Activated B cell treated with CpG ODN at 0.5 μM for 24 hours (primary cell): ENCODE measurements at regions of chr12 and their contacts with region 1.

Region 1: DNA sequence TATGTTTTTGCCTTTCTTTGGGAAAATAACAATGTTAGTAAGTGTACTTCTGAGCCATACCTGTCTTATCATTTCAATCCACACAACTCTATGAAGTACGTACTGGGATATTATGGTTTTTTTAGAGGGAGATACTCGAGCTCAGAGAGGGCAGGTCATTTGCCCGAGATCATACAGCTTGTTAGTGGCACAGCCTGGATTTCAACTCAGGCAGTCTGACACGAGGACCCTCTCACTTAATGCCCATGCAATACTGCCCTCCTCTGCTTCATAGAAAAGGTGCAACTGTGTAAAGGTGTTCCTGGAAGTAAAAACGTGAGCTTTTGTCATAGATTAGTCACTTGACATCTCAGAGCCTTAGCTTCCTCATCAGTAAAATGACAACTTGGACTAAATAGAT is 128.0 kb downstream of the NDUFA12 start:
- DNase-seq: no peak
- ATAC-seq: peak; percentile 74
- H3K4me3 Mint-ChIP-seq: peak overlapping the region; percentile 74
- H3K27ac Mint-ChIP-seq: peak overlapping the region; percentile 46
- H3K4me1 Mint-ChIP-seq: peaks cover 38% of the 10 kb centered on the region
- H3K27me3 Mint-ChIP-seq: peaks cover 37% of the 10 kb centered on the region
- CTCF ChIP-seq: no peak

Region 2: GRCh38 chr12:94149119-94149780 is 726.3 kb before region 1 on chr12:
- CTCF ChIA-PET with region 1: interaction called, 3 read pairs
- POLR2A ChIA-PET with region 1: no interaction called
- intact Hi-C with region 1: loop called (anchors 2 kb)
- DNase-seq: peak; percentile 71
- ATAC-seq: peak; percentile 29
- H3K4me3 Mint-ChIP-seq: peak overlapping the region; percentile 96
- H3K27ac Mint-ChIP-seq: peak overlapping the region; percentile 70
- H3K4me1 Mint-ChIP-seq: peaks cover 58% of the 10 kb centered on the region
- H3K27me3 Mint-ChIP-seq: no peaks in the 10 kb centered on the region
- CTCF ChIP-seq: no peak

Region 3: GRCh38 chr12:94401326-94401725 is 474.2 kb before region 1 on chr12:
- CTCF ChIA-PET with region 1: no interaction called
- POLR2A ChIA-PET with region 1: no interaction called
- intact Hi-C with region 1: no loop called
- DNase-seq: no peak
- ATAC-seq: no peak
- H3K4me3 Mint-ChIP-seq: no peak overlapping the region
- H3K27ac Mint-ChIP-seq: no peak overlapping the region
- H3K4me1 Mint-ChIP-seq: peaks cover 17% of the 10 kb centered on the region
- H3K27me3 Mint-ChIP-seq: no peaks in the 10 kb centered on the region
- CTCF ChIP-seq: no peak

Region 4: DNA sequence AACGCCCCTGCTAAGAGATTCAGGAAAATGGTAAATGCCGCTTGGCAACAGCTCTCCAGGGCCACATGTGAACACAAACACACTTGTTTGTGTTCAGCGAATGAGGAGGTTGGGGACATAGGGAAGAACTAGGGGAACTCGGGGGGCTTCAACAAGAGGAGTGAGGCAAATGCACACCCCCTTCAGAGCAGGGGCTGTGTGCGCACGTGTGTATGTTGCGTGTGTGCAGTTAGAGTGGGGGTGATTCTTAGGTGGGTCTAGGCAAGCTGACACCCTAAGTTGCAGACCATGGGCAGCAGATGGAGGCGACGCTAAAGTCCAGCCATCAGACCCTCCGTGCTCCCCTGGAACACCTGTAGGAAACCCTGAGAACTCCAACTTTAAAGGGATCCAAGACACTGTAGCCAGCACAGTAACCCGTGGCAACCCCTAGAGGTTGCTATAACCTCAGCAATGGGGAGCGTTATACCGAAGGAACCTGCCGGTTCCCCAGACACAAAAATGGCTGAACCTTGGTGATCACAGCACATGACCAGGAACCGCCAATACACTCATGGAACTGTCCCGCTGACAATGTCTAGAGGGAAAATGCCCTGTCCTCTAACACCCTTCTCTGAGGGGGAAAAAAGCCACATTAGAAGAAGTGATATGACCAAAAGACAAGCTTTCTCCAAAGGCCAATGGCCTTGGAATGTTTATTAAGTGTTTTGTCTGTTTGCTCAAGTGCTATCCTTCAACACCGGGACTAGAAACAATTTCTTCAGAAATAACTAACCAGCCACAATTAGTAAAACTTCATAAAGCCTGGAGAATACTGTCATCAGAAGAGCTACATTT is 329.4 kb before region 1 on chr12:
- CTCF ChIA-PET with region 1: interaction called, 4 read pairs
- POLR2A ChIA-PET with region 1: no interaction called
- intact Hi-C with region 1: loop called (anchors 1 kb)
- DNase-seq: no peak
- ATAC-seq: peak; percentile 76
- H3K4me3 Mint-ChIP-seq: no peak overlapping the region
- H3K27ac Mint-ChIP-seq: no peak overlapping the region
- H3K4me1 Mint-ChIP-seq: no peaks in the 10 kb centered on the region
- H3K27me3 Mint-ChIP-seq: no peaks in the 10 kb centered on the region
- CTCF ChIP-seq: no peak

Region 5: GRCh38 chr12:94676031-94676641 is 199.4 kb before region 1 on chr12:
- CTCF ChIA-PET with region 1: interaction called, 6 read pairs
- POLR2A ChIA-PET with region 1: interaction called, 13 read pairs
- intact Hi-C with region 1: no loop called
- DNase-seq: no peak
- ATAC-seq: peak; percentile 96
- H3K4me3 Mint-ChIP-seq: peak overlapping the region; percentile 60
- H3K27ac Mint-ChIP-seq: peak overlapping the region; percentile 81
- H3K4me1 Mint-ChIP-seq: peaks cover 39% of the 10 kb centered on the region
- H3K27me3 Mint-ChIP-seq: no peaks in the 10 kb centered on the region
- CTCF ChIP-seq: no peak

Region 6: DNA sequence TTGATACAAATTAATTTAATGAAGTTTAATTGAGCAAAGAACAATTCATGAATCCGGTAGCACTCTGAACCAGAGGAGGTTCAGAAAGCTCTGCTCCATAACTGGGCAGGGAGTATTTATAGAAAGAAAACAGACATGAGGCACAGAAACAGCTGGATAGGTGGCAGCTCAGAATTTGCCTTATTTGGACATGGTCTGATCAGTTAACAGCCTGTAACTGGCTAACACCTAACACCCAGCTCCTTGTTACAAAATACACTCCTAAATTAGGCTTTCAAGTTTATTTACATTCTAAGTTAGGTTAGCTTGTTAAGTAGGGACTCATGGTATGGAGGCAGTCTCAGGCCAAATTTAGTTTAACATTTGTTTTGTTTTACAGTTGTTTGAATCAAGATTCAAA is 157.4 kb before region 1 on chr12:
- CTCF ChIA-PET with region 1: interaction called, 17 read pairs
- POLR2A ChIA-PET with region 1: interaction called, 5 read pairs
- intact Hi-C with region 1: no loop called
- DNase-seq: no peak
- ATAC-seq: no peak
- H3K4me3 Mint-ChIP-seq: no peak overlapping the region
- H3K27ac Mint-ChIP-seq: no peak overlapping the region
- H3K4me1 Mint-ChIP-seq: peaks cover 39% of the 10 kb centered on the region
- H3K27me3 Mint-ChIP-seq: no peaks in the 10 kb centered on the region
- CTCF ChIP-seq: no peak

Region 7: GRCh38 chr12:94769047-94769420 is 106.5 kb before region 1 on chr12:
- CTCF ChIA-PET with region 1: interaction called, 31 read pairs
- POLR2A ChIA-PET with region 1: interaction called, 26 read pairs
- intact Hi-C with region 1: loop called (anchors 1 kb)
- DNase-seq: peak; percentile 26
- ATAC-seq: peak; percentile 86
- H3K4me3 Mint-ChIP-seq: peak overlapping the region; percentile 86
- H3K27ac Mint-ChIP-seq: peak overlapping the region; percentile 98
- H3K4me1 Mint-ChIP-seq: peaks cover 68% of the 10 kb centered on the region
- H3K27me3 Mint-ChIP-seq: no peaks in the 10 kb centered on the region
- CTCF ChIP-seq: no peak

Region 8: DNA sequence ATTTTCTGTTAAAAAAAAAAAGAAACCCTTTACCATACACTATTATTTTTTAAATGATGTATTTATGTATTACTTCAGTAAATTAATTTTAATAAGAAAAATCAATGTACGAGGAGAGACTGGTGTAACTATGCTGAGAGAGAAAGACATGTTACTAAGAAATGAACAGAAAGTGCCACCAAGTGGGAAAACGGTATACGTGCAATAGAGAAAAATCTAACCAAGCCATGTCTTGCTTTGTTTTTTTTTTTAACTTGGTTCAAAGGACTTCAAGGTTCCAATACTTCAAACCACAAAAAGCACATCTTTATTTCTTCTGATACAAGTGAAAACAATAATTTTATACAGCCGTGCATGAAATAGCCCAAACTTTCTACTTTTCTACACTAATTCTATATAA is 105.1 kb after region 1 on chr12:
- CTCF ChIA-PET with region 1: interaction called, 3 read pairs
- POLR2A ChIA-PET with region 1: no interaction called
- intact Hi-C with region 1: loop called (anchors 5 kb)
- DNase-seq: no peak
- ATAC-seq: no peak
- H3K4me3 Mint-ChIP-seq: no peak overlapping the region
- H3K27ac Mint-ChIP-seq: no peak overlapping the region
- H3K4me1 Mint-ChIP-seq: peaks cover 5% of the 10 kb centered on the region
- H3K27me3 Mint-ChIP-seq: no peaks in the 10 kb centered on the region
- CTCF ChIP-seq: no peak

Region 9: DNA sequence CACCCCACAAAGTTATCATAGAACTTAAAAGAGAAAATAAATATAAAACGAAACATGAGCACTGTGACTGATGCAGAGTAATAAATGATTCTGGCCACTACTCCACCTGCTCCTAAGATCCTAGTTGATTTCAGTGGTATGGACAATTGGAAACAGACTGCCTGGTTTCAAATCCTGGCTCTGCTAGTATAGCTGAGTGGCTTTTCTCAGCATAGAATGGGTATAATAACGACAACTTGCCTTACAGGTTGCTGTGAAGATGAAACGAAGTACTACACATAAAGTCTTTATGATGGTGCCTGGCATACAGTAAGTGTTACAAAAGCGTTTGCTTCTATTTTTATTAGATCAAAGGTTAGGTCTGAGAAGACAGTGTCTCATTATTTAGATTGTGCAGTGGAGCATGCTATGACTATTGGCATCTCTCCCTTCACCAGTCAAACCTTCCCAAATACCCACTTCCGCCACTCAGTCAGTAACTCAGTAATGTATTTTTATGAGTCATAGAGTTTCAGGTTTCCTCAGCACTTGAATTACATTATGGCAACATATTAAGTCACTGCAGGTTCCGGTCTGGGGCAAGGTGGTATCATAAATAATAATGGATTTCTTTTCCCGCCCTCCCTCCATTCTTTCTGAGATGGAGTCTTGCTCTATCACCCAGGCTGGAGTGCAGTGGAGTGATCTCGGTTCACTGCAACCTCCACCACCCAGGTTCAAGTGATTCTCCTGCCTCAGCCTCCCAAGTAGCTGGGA is 227.6 kb after region 1 on chr12:
- CTCF ChIA-PET with region 1: no interaction called
- POLR2A ChIA-PET with region 1: no interaction called
- intact Hi-C with region 1: no loop called
- DNase-seq: no peak
- ATAC-seq: peak; percentile 94
- H3K4me3 Mint-ChIP-seq: no peak overlapping the region
- H3K27ac Mint-ChIP-seq: peak overlapping the region; percentile 37
- H3K4me1 Mint-ChIP-seq: peaks cover 17% of the 10 kb centered on the region
- H3K27me3 Mint-ChIP-seq: no peaks in the 10 kb centered on the region
- CTCF ChIP-seq: no peak